Posterior vena cava (tissue), 2 donors: ENCODE measurements at regions of chr4 and their contacts with region 1.

Region 1: DNA sequence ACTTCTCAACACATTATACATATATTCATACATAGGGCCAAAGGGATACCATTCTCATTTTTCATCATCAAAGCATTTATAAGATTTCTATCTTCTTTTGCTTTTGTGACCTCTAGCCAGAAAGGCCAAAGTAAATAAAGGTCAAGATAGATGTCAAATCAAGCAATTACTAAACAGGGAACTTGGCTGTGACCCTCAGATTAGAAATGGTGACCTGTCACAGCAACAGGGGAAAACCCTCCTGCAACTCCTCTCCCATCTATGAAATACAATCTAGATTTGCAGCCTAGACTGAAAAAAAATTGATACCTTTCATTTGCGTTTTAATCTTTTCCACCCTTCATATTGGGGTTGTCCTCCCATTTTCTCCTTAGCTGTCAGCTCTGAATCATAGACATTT is 225.6 kb upstream of the FAM241A start:
- DNase-seq: no peak

Region 2: DNA sequence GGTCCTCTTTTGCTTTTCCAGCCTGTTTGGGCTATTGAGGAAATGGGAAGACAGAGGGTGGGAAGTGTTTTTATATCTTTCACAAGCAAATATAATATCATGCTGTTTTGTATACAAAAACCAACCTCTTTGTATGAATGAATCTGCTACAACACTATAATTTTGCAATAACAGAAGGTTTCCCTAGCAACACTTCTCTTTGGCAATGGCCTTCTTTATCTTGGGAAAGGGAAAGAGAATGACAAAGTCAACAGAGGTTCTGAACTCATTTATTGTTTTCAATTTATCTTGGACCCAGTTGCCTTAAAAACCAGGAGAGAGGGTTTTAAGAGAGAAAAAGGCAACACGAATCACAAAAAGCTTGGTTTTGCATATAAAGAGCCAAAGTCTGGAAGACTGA is 103.7 kb after region 1 on chr4:
- intact Hi-C with region 1: no loop called
- DNase-seq: no peak

Region 3: DNA sequence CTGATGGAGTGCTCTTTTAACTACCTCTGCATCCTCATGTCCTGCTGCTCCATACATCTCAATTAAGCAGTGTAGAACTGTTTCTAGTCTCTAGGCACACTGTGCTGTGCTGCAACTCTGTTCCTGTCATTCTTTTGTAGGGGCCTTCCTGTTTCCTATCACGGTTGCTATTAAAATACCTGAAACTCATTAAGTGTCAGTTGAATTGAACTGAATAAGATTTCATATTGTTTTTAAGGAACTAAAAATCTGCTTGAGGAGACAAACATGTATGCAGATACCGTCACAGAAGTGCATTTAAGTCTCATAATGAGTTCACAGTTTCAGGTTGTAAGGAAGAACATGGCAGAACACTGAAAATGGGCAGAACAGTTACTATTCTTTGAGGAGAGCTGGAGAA is 887.4 kb after region 1 on chr4:
- intact Hi-C with region 1: loop called in 1 of 2 experiments (anchors 10 kb)
- DNase-seq: no peak